Mammary epithelial cell (primary cell): ENCODE measurements at regions of chr16 and their contacts with region 1.

Region 1: DNA sequence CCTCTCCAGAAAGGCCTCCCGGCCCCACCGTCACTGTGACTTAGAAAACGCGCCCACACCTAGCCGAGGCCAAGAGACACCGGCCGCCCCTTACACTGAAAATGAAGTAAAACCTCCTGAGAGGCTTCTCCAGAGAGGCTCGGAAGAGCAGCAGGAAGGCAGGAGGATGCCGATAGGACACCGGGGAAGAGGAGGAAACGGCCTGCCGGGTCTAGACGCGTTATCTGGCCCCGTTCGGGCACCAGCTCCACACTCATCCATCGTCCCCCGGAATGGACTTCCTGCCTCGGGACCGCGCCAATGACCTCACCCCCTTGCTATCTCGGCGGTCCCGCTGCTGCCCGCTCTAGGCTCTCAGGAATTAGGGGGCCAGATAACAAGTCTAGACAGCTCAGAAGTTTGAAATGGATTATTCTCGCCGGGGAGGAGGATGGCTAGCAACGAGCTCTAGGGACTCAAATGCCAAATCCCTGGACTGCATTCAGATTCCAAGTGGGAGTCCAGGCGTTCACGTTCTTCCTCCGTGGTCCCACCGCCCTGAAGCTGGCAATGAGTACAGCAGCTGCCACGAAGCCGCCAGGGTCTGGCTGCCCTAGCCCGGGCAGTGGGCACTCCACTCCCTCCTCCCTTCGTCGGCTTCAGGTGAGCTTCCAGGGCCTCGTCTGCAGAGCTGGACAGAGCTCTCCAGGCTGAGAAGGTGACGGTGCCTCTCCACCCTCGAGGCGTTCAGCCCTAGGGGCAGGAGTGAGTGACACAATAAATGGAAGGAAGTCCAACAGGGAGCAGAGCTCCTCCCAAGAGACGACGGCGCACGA is 350.9 kb downstream of the FOXL1 start:
- DNase-seq: peak; percentile 54
- H3K4me3 ChIP-seq: no peak overlapping the region
- H3K27ac ChIP-seq: no peak overlapping the region
- H3K4me1 ChIP-seq: peaks cover 22% of the 10 kb centered on the region
- H3K27me3 ChIP-seq: no peaks in the 10 kb centered on the region
- CTCF ChIP-seq: no peak

Region 2: DNA sequence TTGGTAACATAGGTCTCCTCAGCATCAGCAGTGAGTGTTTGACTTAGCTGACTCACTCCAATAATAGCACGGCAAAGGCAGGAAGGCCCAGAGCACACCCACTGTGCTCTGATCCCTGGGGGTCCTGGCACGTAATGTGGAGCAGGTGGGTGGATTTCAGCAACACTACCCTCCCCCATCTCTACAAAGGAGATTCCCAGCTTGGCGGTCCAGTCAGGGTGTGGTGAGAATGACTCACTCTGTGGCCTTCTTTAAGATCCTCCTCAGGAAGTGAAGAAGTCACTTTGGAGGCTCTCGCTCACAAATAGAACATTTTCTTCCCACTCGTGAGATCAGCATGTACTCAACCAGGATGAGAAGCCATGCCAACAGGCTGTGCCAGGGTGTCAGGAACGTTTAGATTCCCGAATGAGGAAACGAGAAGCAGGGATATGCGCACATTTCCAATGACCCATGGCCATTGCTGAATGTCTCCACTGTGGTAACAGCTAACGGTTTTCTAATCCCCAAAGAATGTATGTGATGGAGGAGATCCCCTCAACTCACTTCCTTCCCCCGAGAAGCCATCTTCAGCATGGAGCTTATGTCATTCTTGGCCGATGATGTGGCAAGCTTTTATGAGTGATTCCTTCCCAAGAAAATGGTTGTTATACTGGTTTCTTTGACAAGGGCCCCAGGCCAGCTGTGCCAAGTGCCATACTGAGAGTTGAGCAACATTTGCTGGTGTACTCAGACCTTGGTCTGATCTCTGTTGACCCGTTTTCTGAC is 22.8 kb after region 1 on chr16:
- CTCF ChIA-PET with region 1: no interaction called
- dilution Hi-C with region 1: no loop called
- in situ Hi-C with region 1: no loop called
- intact Hi-C with region 1: loop called (anchors 2 kb)
- DNase-seq: peak; percentile 92
- H3K4me3 ChIP-seq: no peak overlapping the region
- H3K27ac ChIP-seq: peak overlapping the region; percentile 17
- H3K4me1 ChIP-seq: peaks cover 30% of the 10 kb centered on the region
- H3K27me3 ChIP-seq: no peaks in the 10 kb centered on the region
- CTCF ChIP-seq: no peak

Region 3: GRCh38 chr16:86971251-86971650 is 42.0 kb after region 1 on chr16:
- CTCF ChIA-PET with region 1: no interaction called
- dilution Hi-C with region 1: loop called (anchors 5 kb)
- in situ Hi-C with region 1: no loop called
- intact Hi-C with region 1: no loop called
- DNase-seq: no peak
- H3K4me3 ChIP-seq: no peak overlapping the region
- H3K27ac ChIP-seq: no peak overlapping the region
- H3K4me1 ChIP-seq: peaks cover 3% of the 10 kb centered on the region
- H3K27me3 ChIP-seq: no peaks in the 10 kb centered on the region
- CTCF ChIP-seq: no peak

Region 4: DNA sequence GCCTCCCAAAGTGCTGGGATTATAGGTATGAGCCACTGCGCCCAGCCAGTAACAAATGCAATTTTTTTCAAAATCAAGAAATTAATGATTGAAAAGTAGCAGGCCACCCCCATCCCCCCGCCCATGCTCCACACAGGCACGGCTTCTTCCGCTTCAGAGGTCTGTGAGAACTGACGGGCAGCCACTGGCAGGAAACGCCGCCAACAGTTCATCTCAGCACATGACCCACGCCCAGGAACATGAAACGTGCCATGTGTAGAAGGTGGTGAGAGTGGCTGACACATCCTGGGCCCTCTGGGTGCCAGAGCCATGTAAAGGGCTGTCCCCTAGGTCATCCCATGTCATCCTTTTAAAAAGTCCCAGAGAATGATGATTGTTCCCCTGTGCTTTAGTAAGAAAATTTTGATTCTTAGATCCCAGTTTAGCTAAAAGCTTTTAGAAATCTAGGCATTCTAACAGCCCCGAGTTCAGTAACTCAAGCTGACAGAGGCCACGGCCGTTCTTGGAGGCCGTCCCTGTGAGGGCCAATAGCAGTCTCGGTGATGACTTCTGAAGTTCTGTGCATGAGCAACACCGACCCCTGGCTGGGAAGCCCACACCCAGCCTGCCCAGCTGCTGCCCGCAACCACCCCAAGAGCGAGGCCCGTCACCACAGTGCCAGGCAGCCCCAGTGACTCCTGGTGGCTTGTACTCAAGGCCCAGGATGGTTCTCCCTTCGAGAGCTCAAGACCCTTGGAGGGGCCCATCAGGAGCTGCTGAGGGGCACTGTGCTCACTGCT is 784.4 kb after region 1 on chr16:
- CTCF ChIA-PET with region 1: no interaction called
- dilution Hi-C with region 1: no loop called
- in situ Hi-C with region 1: no loop called
- intact Hi-C with region 1: no loop called
- DNase-seq: no peak
- H3K4me3 ChIP-seq: no peak overlapping the region
- H3K27ac ChIP-seq: no peak overlapping the region
- H3K4me1 ChIP-seq: no peaks in the 10 kb centered on the region
- H3K27me3 ChIP-seq: no peaks in the 10 kb centered on the region
- CTCF ChIP-seq: no peak